Left cardiac atrium (tissue), 4 donors: ENCODE measurements at regions of chr19 and their contacts with region 1.

Region 1: GRCh38 chr19:11374433-11375142 is at the start of gene SWSAP1:
- DNase-seq: peak; percentile 98
- ATAC-seq: peak; percentile 96 to 97
- total RNA-seq, gene SWSAP1: 1.3 to 1.5 TPM

Region 2: GRCh38 chr19:11293433-11294389 is 80.9 kb before region 1 on chr19:
- intact Hi-C with region 1: no loop called
- DNase-seq: peak; percentile 97
- ATAC-seq: peak; percentile 96 to 99

Region 3: GRCh38 chr19:11435058-11435832 is 60.7 kb after region 1 on chr19 and contains the starts of genes ODAD3 and PRKCSH:
- intact Hi-C with region 1: loop called in 1 of 2 experiments (anchors 10 kb)
- DNase-seq: peak; percentile 99
- ATAC-seq: peak; percentile 98
- total RNA-seq, gene ODAD3: 0.56 to 0.68 TPM
- total RNA-seq, gene PRKCSH: 132 to 139 TPM